PC-3 (cell line): ENCODE measurements at regions of chr7 and their contacts with region 1.

Region 1: GRCh38 chr7:35185907-35186731 is 67.8 kb downstream of the TBX20 start:
- DNase-seq: no peak
- ATAC-seq: peak; percentile 84
- H3K4me3 ChIP-seq: peak overlapping the region; percentile 47
- H3K27ac ChIP-seq: no peak overlapping the region
- H3K4me1 ChIP-seq: no peaks in the 10 kb centered on the region
- H3K27me3 ChIP-seq: peaks cover 21% of the 10 kb centered on the region
- CTCF ChIP-seq: no peak

Region 2: GRCh38 chr7:35241884-35242283 is 55.8 kb after region 1 on chr7:
- CTCF ChIA-PET with region 1: no interaction called
- POLR2A ChIA-PET with region 1: no interaction called
- intact Hi-C with region 1: loop called (anchors 10 kb)
- DNase-seq: peak; percentile 7
- ATAC-seq: peak; percentile 59
- H3K4me3 ChIP-seq: no peak overlapping the region
- H3K27ac ChIP-seq: no peak overlapping the region
- H3K4me1 ChIP-seq: no peaks in the 10 kb centered on the region; the same call in 1 of the 2 replicates
- H3K27me3 ChIP-seq: no peaks in the 10 kb centered on the region
- CTCF ChIP-seq: no peak

Region 3: GRCh38 chr7:35430547-35431153 is 244.5 kb after region 1 on chr7:
- CTCF ChIA-PET with region 1: no interaction called
- POLR2A ChIA-PET with region 1: no interaction called
- intact Hi-C with region 1: loop called (anchors 2 kb)
- DNase-seq: peak; percentile 52
- ATAC-seq: peak; percentile 48; the same call in 1 of the 2 replicates
- H3K4me3 ChIP-seq: no peak overlapping the region
- H3K27ac ChIP-seq: no peak overlapping the region
- H3K4me1 ChIP-seq: no peaks in the 10 kb centered on the region
- H3K27me3 ChIP-seq: peaks cover 8% of the 10 kb centered on the region; the same call in 1 of the 2 replicates
- CTCF ChIP-seq: peak; percentile 65

Region 4: GRCh38 chr7:35446091-35446490 is 260.0 kb after region 1 on chr7:
- CTCF ChIA-PET with region 1: no interaction called
- POLR2A ChIA-PET with region 1: no interaction called
- intact Hi-C with region 1: no loop called
- DNase-seq: no peak
- ATAC-seq: no peak
- H3K4me3 ChIP-seq: no peak overlapping the region
- H3K27ac ChIP-seq: no peak overlapping the region
- H3K4me1 ChIP-seq: no peaks in the 10 kb centered on the region
- H3K27me3 ChIP-seq: peaks cover 61% of the 10 kb centered on the region
- CTCF ChIP-seq: no peak

Region 5: DNA sequence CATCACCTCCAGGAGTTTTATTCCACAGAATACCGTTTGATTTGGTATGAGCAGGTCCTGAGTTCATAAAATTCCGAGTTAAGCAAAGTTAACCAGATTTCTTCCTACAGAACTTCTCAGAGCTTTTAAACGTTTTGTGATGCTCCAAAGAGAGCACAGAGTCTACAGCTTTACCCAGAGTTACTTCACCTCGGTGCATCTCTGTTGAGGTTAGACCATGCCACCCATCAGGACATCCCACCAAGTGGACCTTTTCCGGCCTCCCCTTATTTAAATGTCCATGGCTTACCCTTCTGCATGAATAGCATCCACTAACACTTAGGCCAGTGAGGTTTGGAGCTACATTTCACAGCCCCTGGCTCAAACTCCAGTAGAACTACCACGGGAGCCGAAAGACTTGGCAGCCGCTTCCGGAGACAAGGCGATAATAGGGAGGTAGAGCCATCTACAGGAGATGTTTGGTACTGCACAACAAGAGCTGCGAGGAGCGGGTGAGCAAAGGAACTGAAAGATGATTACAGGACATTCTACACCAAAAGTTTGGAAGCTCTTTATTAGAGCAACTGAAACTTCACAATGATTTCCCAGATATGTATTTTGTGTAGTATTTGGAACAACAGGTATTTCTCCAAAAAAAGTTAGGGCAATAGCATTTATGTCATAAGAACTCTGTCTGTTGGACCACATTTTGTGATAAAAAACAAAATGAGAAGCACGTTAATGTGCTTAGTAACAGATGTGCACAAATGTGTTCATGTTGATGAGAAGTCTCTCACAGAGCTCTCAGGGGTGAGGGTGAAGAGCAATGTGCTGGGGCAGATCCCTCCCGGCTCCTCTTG is 334.1 kb after region 1 on chr7:
- CTCF ChIA-PET with region 1: no interaction called
- POLR2A ChIA-PET with region 1: no interaction called
- intact Hi-C with region 1: loop called (anchors 5 kb)
- DNase-seq: peak; percentile 81
- ATAC-seq: peak; percentile 74
- H3K4me3 ChIP-seq: no peak overlapping the region
- H3K27ac ChIP-seq: no peak overlapping the region
- H3K4me1 ChIP-seq: peaks cover 16% of the 10 kb centered on the region
- H3K27me3 ChIP-seq: peaks cover 28% of the 10 kb centered on the region
- CTCF ChIP-seq: peak; percentile 89

Region 6: GRCh38 chr7:35537067-35538023 is 351.2 kb after region 1 on chr7:
- CTCF ChIA-PET with region 1: no interaction called
- POLR2A ChIA-PET with region 1: no interaction called
- intact Hi-C with region 1: loop called (anchors 2 kb)
- DNase-seq: peak; percentile 80
- ATAC-seq: peak; percentile 98
- H3K4me3 ChIP-seq: peak overlapping the region; percentile 53; the same call in 1 of the 2 replicates
- H3K27ac ChIP-seq: no peak overlapping the region
- H3K4me1 ChIP-seq: peaks cover 8% of the 10 kb centered on the region; the same call in 1 of the 2 replicates
- H3K27me3 ChIP-seq: peaks cover 12% of the 10 kb centered on the region; the same call in 1 of the 2 replicates
- CTCF ChIP-seq: peak; percentile 85

Region 7: DNA sequence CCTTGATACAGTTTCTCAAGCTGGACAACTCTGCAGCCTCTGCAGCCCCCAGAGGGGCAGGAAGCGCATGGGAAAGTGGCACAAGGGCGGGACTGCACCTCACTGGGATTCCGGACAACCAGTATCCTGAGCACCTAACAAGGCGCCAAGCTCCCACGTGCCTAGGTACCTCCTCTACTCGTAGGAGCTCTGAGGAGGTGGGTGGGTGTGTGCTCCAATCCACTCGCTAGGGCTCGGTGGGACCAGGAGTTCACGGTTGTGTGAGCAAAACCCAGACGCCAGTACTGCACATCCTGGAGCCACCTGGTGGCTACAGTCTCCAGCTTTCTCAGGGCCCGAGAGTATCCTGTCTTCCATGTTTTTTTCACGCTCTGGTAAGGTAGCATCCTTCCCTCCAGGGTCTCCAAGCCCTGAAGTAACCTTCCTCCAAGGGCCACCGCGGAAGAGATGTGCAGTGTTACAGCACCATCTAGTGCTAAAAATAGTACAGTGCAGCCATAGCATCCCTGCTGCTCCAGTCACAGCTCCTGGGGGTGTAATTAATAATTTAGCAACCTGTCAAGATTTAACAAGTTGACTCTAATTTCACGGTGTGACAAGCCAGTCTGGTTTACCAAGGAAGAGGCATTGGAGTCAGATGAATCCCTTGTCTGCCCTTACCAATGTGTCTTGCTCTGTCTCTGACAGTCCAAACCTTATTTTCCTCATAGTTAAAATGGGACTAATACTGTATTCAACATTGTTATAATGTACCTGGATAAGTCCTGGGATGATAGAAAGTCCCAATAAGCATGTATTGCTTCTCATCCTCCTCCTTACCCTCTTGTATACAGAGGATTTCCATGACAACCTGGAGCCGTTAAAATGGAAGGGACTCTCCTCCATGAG is 438.4 kb after region 1 on chr7:
- CTCF ChIA-PET with region 1: interaction called, 4 read pairs
- POLR2A ChIA-PET with region 1: no interaction called
- intact Hi-C with region 1: loop called (anchors 2 kb)
- DNase-seq: peak; percentile 56
- ATAC-seq: peak; percentile 73
- H3K4me3 ChIP-seq: no peak overlapping the region
- H3K27ac ChIP-seq: no peak overlapping the region
- H3K4me1 ChIP-seq: no peaks in the 10 kb centered on the region
- H3K27me3 ChIP-seq: no peaks in the 10 kb centered on the region
- CTCF ChIP-seq: peak; percentile 87